ENCODE measurements at regions of chr12 and their contacts with region 1.

Region 1: GRCh38 chr12:56630160-56630632 is at the start of gene BAZ2A:
- DNase-seq: peak; percentile 71 to 93 (median 81)
- ATAC-seq: peak; percentile 72
- H3K4me3 ChIP-seq: peak within 1 kb of the TSS; percentile 100
- H3K4me3 Mint-ChIP-seq: peak within 1 kb of the TSS; percentile 93
- H3K27ac ChIP-seq: peak within 1 kb of the TSS; percentile 88 to 96
- H3K27ac Mint-ChIP-seq: peak within 1 kb of the TSS; percentile 94
- H3K4me1 ChIP-seq: peaks cover 65% of the 10 kb centered on the region
- H3K4me1 Mint-ChIP-seq: peaks cover 78% of the 10 kb centered on the region
- H3K27me3 ChIP-seq: no peaks in the 10 kb centered on the region
- H3K27me3 Mint-ChIP-seq: no peaks in the 10 kb centered on the region
- CTCF ChIP-seq: no peak
- total RNA-seq, gene BAZ2A: 207 to 211 TPM

Region 2: DNA sequence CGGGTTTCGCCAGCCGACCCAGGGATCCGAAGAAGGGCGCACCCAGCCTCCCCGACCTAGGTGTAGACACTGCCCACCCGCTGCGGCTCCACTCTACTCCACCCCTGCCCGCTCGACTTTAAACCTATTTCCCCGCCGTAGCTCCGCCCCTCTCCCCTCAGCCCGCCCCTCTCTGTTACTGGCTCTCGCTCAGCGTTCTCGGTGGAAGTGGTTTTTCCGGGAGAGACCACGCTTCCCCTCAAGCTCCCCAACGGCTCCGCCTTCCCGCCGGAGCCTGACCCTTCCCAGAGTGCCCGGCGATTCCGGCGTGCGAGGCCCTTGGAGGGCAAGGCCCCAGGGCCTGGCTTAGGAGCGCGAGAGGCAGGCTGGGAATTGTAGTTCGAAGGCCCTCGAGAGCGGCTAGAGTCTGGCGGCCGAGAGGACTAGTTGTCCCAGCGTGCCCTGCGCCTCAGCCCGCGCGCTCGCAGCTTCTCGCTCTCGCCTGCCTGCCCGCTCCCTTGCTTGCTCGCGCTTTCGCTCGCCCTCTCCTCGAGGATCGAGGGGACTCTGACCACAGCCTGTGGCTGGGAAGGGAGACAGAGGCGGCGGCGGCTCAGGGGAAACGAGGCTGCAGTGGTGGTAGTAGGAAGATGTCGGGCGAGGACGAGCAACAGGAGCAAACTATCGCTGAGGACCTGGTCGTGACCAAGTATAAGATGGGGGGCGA is 525.9 kb before region 1 on chr12 and contains the start of gene PA2G4:
- CTCF ChIA-PET with region 1: no interaction called
- POLR2A ChIA-PET with region 1: interaction called, 11 read pairs
- intact Hi-C with region 1: no loop called
- DNase-seq: peak; percentile 89 to 99 (median 96)
- ATAC-seq: peak; percentile 88
- H3K4me3 ChIP-seq: peak within 1 kb of the TSS; percentile 90
- H3K4me3 Mint-ChIP-seq: peak within 1 kb of the TSS; percentile 93
- H3K27ac ChIP-seq: peak within 1 kb of the TSS; percentile 63 to 95
- H3K27ac Mint-ChIP-seq: peak within 1 kb of the TSS; percentile 100
- H3K4me1 ChIP-seq: peaks cover 48% of the 10 kb centered on the region
- H3K4me1 Mint-ChIP-seq: peaks cover 67% of the 10 kb centered on the region
- H3K27me3 ChIP-seq: no peaks in the 10 kb centered on the region
- H3K27me3 Mint-ChIP-seq: no peaks in the 10 kb centered on the region
- CTCF ChIP-seq: no peak
- total RNA-seq, gene PA2G4: 51.0 to 61.0 TPM

Region 3: GRCh38 chr12:56521590-56522371 is 108.4 kb before region 1 on chr12 and contains the start of gene RBMS2:
- CTCF ChIA-PET with region 1: no interaction called
- POLR2A ChIA-PET with region 1: interaction called, 18 read pairs
- intact Hi-C with region 1: no loop called
- DNase-seq: peak in 13 of 14 experiments; percentile 10 to 82 (median 31)
- ATAC-seq: peak; percentile 93
- H3K4me3 ChIP-seq: peak within 1 kb of the TSS; percentile 54
- H3K4me3 Mint-ChIP-seq: peak within 1 kb of the TSS; percentile 98
- H3K27ac ChIP-seq: peak within 1 kb of the TSS in 1 of 2 donors; percentile 14
- H3K27ac Mint-ChIP-seq: peak within 1 kb of the TSS; percentile 71
- H3K4me1 ChIP-seq: peaks cover 20% of the 10 kb centered on the region
- H3K4me1 Mint-ChIP-seq: peaks cover 38% of the 10 kb centered on the region
- H3K27me3 ChIP-seq: no peaks in the 10 kb centered on the region
- H3K27me3 Mint-ChIP-seq: no peaks in the 10 kb centered on the region
- CTCF ChIP-seq: no peak
- total RNA-seq, gene RBMS2: 5.1 to 10.8 TPM

Region 4: GRCh38 chr12:56601503-56601902 is 28.7 kb before region 1 on chr12:
- CTCF ChIA-PET with region 1: interaction called, 14 read pairs
- POLR2A ChIA-PET with region 1: interaction called, 12 read pairs
- intact Hi-C with region 1: no loop called
- DNase-seq: peak; percentile 14 to 59 (median 34)
- ATAC-seq: peak; percentile 69
- H3K4me3 ChIP-seq: no peak overlapping the region
- H3K4me3 Mint-ChIP-seq: no peak overlapping the region
- H3K27ac ChIP-seq: no peak overlapping the region
- H3K27ac Mint-ChIP-seq: no peak overlapping the region
- H3K4me1 ChIP-seq: no peaks in the 10 kb centered on the region
- H3K4me1 Mint-ChIP-seq: no peaks in the 10 kb centered on the region
- H3K27me3 ChIP-seq: no peaks in the 10 kb centered on the region
- H3K27me3 Mint-ChIP-seq: no peaks in the 10 kb centered on the region
- CTCF ChIP-seq: no peak

Region 5: GRCh38 chr12:56645717-56646446 is 15.7 kb after region 1 on chr12 and contains the start of gene ATP5F1B:
- CTCF ChIA-PET with region 1: interaction called, 3 read pairs
- POLR2A ChIA-PET with region 1: interaction called, 93 read pairs
- intact Hi-C with region 1: no loop called
- DNase-seq: peak; percentile 74 to 99 (median 84)
- ATAC-seq: peak; percentile 95
- H3K4me3 ChIP-seq: peak within 1 kb of the TSS; percentile 83
- H3K4me3 Mint-ChIP-seq: peak within 1 kb of the TSS; percentile 85
- H3K27ac ChIP-seq: peak within 1 kb of the TSS; percentile 86 to 91
- H3K27ac Mint-ChIP-seq: peak within 1 kb of the TSS; percentile 88
- H3K4me1 ChIP-seq: peaks cover 36% of the 10 kb centered on the region
- H3K4me1 Mint-ChIP-seq: peaks cover 34% of the 10 kb centered on the region
- H3K27me3 ChIP-seq: no peaks in the 10 kb centered on the region
- H3K27me3 Mint-ChIP-seq: no peaks in the 10 kb centered on the region
- CTCF ChIP-seq: no peak
- total RNA-seq, gene ATP5F1B: 305 to 318 TPM

Region 6: DNA sequence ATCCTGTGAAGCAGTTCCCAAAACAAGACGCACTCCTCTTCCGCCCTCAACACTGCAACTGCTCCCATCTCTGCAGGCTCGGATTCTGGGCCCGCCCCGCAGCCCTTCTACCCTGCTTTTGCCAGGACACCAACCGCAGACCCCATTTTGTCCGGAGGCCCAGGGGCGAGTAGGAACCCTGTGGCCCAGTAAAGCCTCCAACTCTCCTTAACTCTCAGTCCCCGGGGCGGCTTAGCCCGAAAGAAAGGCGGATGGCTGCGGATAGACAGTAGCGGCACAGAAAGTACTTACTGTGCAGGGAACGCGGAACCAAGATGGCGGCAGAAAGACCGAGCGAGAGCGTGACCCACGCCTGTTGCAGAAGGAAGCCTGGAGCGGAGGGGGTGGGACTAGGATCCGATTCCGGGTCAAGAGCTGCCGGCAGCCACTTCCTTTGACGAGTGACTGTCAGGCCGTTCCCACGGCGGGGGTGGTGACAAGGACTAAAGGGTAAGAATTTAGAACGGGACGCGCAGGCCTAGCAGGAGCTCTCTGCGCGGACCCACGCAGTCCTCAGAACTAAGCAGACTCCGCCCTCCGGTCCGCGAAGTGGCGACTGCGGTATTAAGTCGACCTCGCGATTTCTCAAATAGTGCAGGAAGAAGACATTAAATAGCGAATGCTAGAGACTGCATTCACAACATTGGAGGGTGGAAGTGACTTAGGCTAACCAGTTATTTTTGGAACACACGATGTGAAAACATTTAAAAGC is 95.0 kb after region 1 on chr12 and contains the start of gene NACA:
- CTCF ChIA-PET with region 1: interaction called, 4 read pairs
- POLR2A ChIA-PET with region 1: interaction called, 42 read pairs
- intact Hi-C with region 1: no loop called
- DNase-seq: peak; percentile 94 to 99 (median 96)
- ATAC-seq: peak; percentile 93
- H3K4me3 ChIP-seq: peak within 1 kb of the TSS; percentile 97
- H3K4me3 Mint-ChIP-seq: peak within 1 kb of the TSS; percentile 98
- H3K27ac ChIP-seq: peak within 1 kb of the TSS; percentile 86 to 91
- H3K27ac Mint-ChIP-seq: peak within 1 kb of the TSS; percentile 92
- H3K4me1 ChIP-seq: peaks cover 49% of the 10 kb centered on the region
- H3K4me1 Mint-ChIP-seq: peaks cover 60% of the 10 kb centered on the region
- H3K27me3 ChIP-seq: no peaks in the 10 kb centered on the region
- H3K27me3 Mint-ChIP-seq: no peaks in the 10 kb centered on the region
- CTCF ChIP-seq: no peak
- total RNA-seq, gene NACA: 1,441 to 1,479 TPM